HepG2 (cell line): ENCODE measurements at regions of chr9 and their contacts with region 1.

Region 1: DNA sequence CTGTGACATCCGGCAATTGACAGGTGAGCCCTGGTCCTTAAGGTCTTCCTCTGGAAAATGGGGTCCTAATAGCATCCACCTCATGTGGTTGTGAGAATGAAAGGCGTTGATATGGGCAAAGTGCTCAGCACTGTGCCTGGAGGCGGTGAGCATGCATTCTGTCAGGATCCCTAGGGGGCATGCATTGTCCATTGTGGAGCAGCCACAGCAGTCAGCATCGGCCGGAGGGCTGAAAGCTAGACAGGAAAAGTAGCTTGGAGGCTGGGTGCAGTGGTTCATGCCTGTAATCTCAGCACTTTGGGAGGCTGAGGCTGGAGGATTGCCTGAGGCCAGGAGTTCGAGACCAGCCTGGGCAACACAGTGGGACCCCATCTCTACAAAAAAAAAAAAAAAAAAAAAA is 122.2 kb downstream of the LHX2 start:
- DNase-seq: peak; percentile 64
- ATAC-seq: peak; percentile 99
- H3K4me3 ChIP-seq: no peak overlapping the region
- H3K27ac ChIP-seq: no peak overlapping the region
- H3K4me1 ChIP-seq: peaks cover 15% of the 10 kb centered on the region
- H3K27me3 ChIP-seq: peaks cover 5 to 21% of the 10 kb centered on the region in 2 experiments; a peak in 2 of 5 replicates
- CTCF ChIP-seq: peak; percentile 95
- EP300 ChIP-seq: no peak
- POLR2A ChIP-seq: no peak
- RAD21 ChIP-seq: peak; percentile 87

Region 2: DNA sequence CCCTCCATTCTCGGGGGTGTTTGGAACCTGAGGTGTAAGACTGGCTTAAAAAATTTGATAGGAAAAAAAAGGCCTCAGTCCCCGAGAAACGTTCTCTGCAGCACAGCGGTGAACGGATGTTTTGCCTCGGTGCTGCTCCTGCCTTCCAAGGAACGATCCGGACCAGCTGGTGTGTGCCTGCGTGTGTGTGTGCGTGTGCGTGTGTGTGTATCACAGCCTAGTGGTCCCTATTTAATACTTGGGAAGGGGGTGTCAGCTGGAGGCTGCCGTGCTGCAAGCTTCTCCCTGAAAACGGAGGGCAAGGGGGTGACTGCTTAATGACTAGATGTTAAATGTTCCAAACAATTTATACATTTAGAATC is 45.3 kb before region 1 on chr9:
- CTCF ChIA-PET with region 1: no interaction called
- POLR2A ChIA-PET with region 1: no interaction called
- in situ Hi-C with region 1: no loop called
- intact Hi-C with region 1: no loop called
- DNase-seq: no peak
- ATAC-seq: no peak
- H3K4me3 ChIP-seq: no peak overlapping the region
- H3K27ac ChIP-seq: no peak overlapping the region
- H3K4me1 ChIP-seq: no peaks in the 10 kb centered on the region
- H3K27me3 ChIP-seq: peaks cover 0 to 9% of the 10 kb centered on the region in 2 experiments; a peak in 2 of 5 replicates
- CTCF ChIP-seq: no peak
- EP300 ChIP-seq: no peak
- POLR2A ChIP-seq: no peak
- RAD21 ChIP-seq: no peak

Region 3: GRCh38 chr9:124257844-124258606 is 124.3 kb after region 1 on chr9 and contains the start of gene NEK6:
- CTCF ChIA-PET with region 1: no interaction called
- POLR2A ChIA-PET with region 1: no interaction called
- in situ Hi-C with region 1: no loop called
- intact Hi-C with region 1: loop called (anchors 5 kb)
- DNase-seq: no peak
- ATAC-seq: no peak
- H3K4me3 ChIP-seq: peak within 1 kb of the TSS; percentile 77 to 99 (median 98)
- H3K27ac ChIP-seq: peak within 1 kb of the TSS; percentile 95
- H3K4me1 ChIP-seq: peaks cover 50% of the 10 kb centered on the region
- H3K27me3 ChIP-seq: peaks cover 0 to 12% of the 10 kb centered on the region in 2 experiments; a peak in 3 of 5 replicates
- CTCF ChIP-seq: no peak
- EP300 ChIP-seq: no peak
- POLR2A ChIP-seq: peak in 1 of 2 experiments; percentile 14; a peak in 1 of 4 replicates
- RAD21 ChIP-seq: no peak; the same call in 1 of the 2 replicates
- total RNA-seq, gene NEK6: 30.4 and 44.7 TPM in 2 replicates

Region 4: DNA sequence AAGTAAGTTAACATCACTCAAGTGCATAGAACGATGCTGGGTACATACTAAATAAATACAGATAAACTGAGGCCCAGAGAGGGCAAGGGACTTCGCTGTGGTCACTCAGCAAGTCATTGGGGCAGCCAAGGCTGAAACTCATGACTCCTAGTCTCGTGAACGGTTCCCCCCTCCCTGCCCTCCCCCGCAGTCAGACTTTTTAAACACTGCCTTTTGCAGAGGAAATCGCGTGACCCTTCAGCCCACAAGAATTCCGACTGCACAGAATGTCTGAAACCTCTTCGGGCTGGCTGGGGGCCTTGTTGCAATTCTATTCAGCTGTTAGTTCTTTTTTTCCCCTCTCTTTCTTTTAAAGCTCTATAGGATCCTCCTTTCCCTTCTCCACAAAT is 152.2 kb after region 1 on chr9:
- CTCF ChIA-PET with region 1: interaction called, 4 read pairs
- POLR2A ChIA-PET with region 1: no interaction called
- in situ Hi-C with region 1: no loop called
- intact Hi-C with region 1: loop called (anchors 10 kb)
- DNase-seq: no peak
- ATAC-seq: no peak
- H3K4me3 ChIP-seq: no peak overlapping the region
- H3K27ac ChIP-seq: peak overlapping the region; percentile 82
- H3K4me1 ChIP-seq: peaks cover 94% of the 10 kb centered on the region
- H3K27me3 ChIP-seq: no peaks in the 10 kb centered on the region
- CTCF ChIP-seq: no peak
- EP300 ChIP-seq: no peak
- POLR2A ChIP-seq: no peak
- RAD21 ChIP-seq: no peak

Region 5: GRCh38 chr9:124320062-124320973 is 186.6 kb after region 1 on chr9:
- CTCF ChIA-PET with region 1: interaction called, 27 read pairs
- POLR2A ChIA-PET with region 1: no interaction called
- in situ Hi-C with region 1: loop called (anchors 5 kb)
- intact Hi-C with region 1: loop called (anchors 1 kb)
- DNase-seq: peak; percentile 47
- ATAC-seq: peak; percentile 85
- H3K4me3 ChIP-seq: no peak overlapping the region
- H3K27ac ChIP-seq: no peak overlapping the region
- H3K4me1 ChIP-seq: no peaks in the 10 kb centered on the region
- H3K27me3 ChIP-seq: no peaks in the 10 kb centered on the region
- CTCF ChIP-seq: peak; percentile 82
- EP300 ChIP-seq: no peak
- POLR2A ChIP-seq: no peak
- RAD21 ChIP-seq: peak; percentile 48

Region 6: GRCh38 chr9:124392871-124393460 is 259.2 kb after region 1 on chr9:
- CTCF ChIA-PET with region 1: no interaction called
- POLR2A ChIA-PET with region 1: no interaction called
- in situ Hi-C with region 1: no loop called
- intact Hi-C with region 1: loop called (anchors 5 kb)
- DNase-seq: no peak
- ATAC-seq: peak; percentile 45
- H3K4me3 ChIP-seq: no peak overlapping the region
- H3K27ac ChIP-seq: no peak overlapping the region
- H3K4me1 ChIP-seq: peaks cover 54% of the 10 kb centered on the region
- H3K27me3 ChIP-seq: no peaks in the 10 kb centered on the region
- CTCF ChIP-seq: peak; percentile 29
- EP300 ChIP-seq: no peak
- POLR2A ChIP-seq: no peak
- RAD21 ChIP-seq: no peak

Region 7: GRCh38 chr9:124684169-124684568 is 550.4 kb after region 1 on chr9:
- CTCF ChIA-PET with region 1: no interaction called
- POLR2A ChIA-PET with region 1: no interaction called
- in situ Hi-C with region 1: no loop called
- intact Hi-C with region 1: no loop called
- DNase-seq: no peak
- ATAC-seq: no peak
- H3K4me3 ChIP-seq: no peak overlapping the region
- H3K27ac ChIP-seq: no peak overlapping the region
- H3K4me1 ChIP-seq: peaks cover 27% of the 10 kb centered on the region
- H3K27me3 ChIP-seq: no peaks in the 10 kb centered on the region
- CTCF ChIP-seq: no peak
- EP300 ChIP-seq: no peak
- POLR2A ChIP-seq: no peak
- RAD21 ChIP-seq: no peak